PC-9 (cell line): ENCODE measurements at regions of chr3 and their contacts with region 1.

Region 1: GRCh38 chr3:140736863-140737460 is 59.1 kb downstream of the TRIM42 start:
- DNase-seq: peak in 1 of 2 experiments; percentile 65
- H3K4me3 ChIP-seq: no peak overlapping the region
- H3K27ac ChIP-seq: no peak overlapping the region
- H3K4me1 ChIP-seq: no peaks in the 10 kb centered on the region
- H3K27me3 ChIP-seq: no peaks in the 10 kb centered on the region
- CTCF ChIP-seq: peak; percentile 79

Region 2: GRCh38 chr3:139935016-139935865 is 801.7 kb before region 1 on chr3 and contains the start of gene CLSTN2:
- CTCF ChIA-PET with region 1: no interaction called
- POLR2A ChIA-PET with region 1: no interaction called
- intact Hi-C with region 1: loop called (anchors 1 kb)
- DNase-seq: no peak
- H3K4me3 ChIP-seq: no peak within 1 kb of the TSS
- H3K27ac ChIP-seq: no peak within 1 kb of the TSS
- H3K4me1 ChIP-seq: no peaks in the 10 kb centered on the region
- H3K27me3 ChIP-seq: no peaks in the 10 kb centered on the region
- CTCF ChIP-seq: no peak
- total RNA-seq, gene CLSTN2: not detected in 2 replicates

Region 3: GRCh38 chr3:140206196-140207048 is 530.5 kb before region 1 on chr3:
- CTCF ChIA-PET with region 1: no interaction called
- POLR2A ChIA-PET with region 1: no interaction called
- intact Hi-C with region 1: loop called (anchors 5 kb)
- DNase-seq: peak in 1 of 2 experiments; percentile 6
- H3K4me3 ChIP-seq: no peak overlapping the region
- H3K27ac ChIP-seq: no peak overlapping the region
- H3K4me1 ChIP-seq: no peaks in the 10 kb centered on the region
- H3K27me3 ChIP-seq: no peaks in the 10 kb centered on the region
- CTCF ChIP-seq: 0 out of 2 replicates have a peak, but pooled peaks have one; percentile 16

Region 4: GRCh38 chr3:140467104-140467577 is 269.8 kb before region 1 on chr3:
- CTCF ChIA-PET with region 1: no interaction called
- POLR2A ChIA-PET with region 1: no interaction called
- intact Hi-C with region 1: loop called (anchors 10 kb)
- DNase-seq: peak; percentile 50 to 93
- H3K4me3 ChIP-seq: no peak overlapping the region
- H3K27ac ChIP-seq: peak overlapping the region; percentile 92
- H3K4me1 ChIP-seq: peaks cover 33% of the 10 kb centered on the region
- H3K27me3 ChIP-seq: no peaks in the 10 kb centered on the region
- CTCF ChIP-seq: no peak